Caco-2 (cell line): ENCODE measurements at regions of chr5 and their contacts with region 1.

Region 1: GRCh38 chr5:125700380-125700861 is 722.8 kb upstream of the GRAMD2B start:
- DNase-seq: peak; percentile 44 to 68
- H3K4me3 ChIP-seq: peak overlapping the region; percentile 31
- H3K4me3 Mint-ChIP-seq: peak overlapping the region; percentile 79
- H3K27ac Mint-ChIP-seq: peak overlapping the region; percentile 94
- H3K4me1 ChIP-seq: peaks cover 36% of the 10 kb centered on the region
- H3K4me1 Mint-ChIP-seq: peaks cover 28% of the 10 kb centered on the region
- H3K27me3 ChIP-seq: no peaks in the 10 kb centered on the region
- H3K27me3 Mint-ChIP-seq: no peaks in the 10 kb centered on the region
- CTCF ChIP-seq: no peak

Region 2: DNA sequence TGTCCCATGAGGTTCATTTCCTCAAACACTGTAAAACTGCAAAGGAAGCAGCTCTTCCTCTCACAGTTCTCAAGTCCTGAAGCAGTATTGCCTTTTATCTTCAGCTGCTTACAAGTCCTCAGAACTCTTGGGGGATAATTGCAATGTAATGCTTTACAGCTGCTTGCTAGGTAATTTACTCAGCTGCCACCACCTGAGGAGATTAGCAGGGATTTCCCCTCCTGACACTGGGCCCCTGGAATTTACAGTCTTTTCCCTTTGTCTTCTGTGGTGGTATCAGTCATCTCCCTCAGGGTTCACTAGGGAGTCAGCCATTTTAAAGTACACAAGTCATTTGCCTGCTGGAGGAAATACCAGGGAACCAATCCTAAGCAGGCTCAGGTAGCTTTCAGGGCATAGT is 31.5 kb before region 1 on chr5:
- CTCF ChIA-PET with region 1: no interaction called
- POLR2A ChIA-PET with region 1: no interaction called
- intact Hi-C with region 1: loop called (anchors 1 kb)
- DNase-seq: peak; percentile 84 to 91
- H3K4me3 ChIP-seq: no peak overlapping the region
- H3K4me3 Mint-ChIP-seq: no peak overlapping the region
- H3K27ac Mint-ChIP-seq: peak overlapping the region; percentile 79
- H3K4me1 ChIP-seq: peaks cover 25% of the 10 kb centered on the region
- H3K4me1 Mint-ChIP-seq: peaks cover 16% of the 10 kb centered on the region
- H3K27me3 ChIP-seq: no peaks in the 10 kb centered on the region
- H3K27me3 Mint-ChIP-seq: no peaks in the 10 kb centered on the region
- CTCF ChIP-seq: no peak

Region 3: GRCh38 chr5:125685771-125686170 is 14.7 kb before region 1 on chr5:
- CTCF ChIA-PET with region 1: no interaction called
- POLR2A ChIA-PET with region 1: no interaction called
- intact Hi-C with region 1: no loop called
- DNase-seq: no peak
- H3K4me3 ChIP-seq: no peak overlapping the region
- H3K4me3 Mint-ChIP-seq: no peak overlapping the region
- H3K27ac Mint-ChIP-seq: no peak overlapping the region
- H3K4me1 ChIP-seq: peaks cover 12% of the 10 kb centered on the region
- H3K4me1 Mint-ChIP-seq: peaks cover 25% of the 10 kb centered on the region
- H3K27me3 ChIP-seq: no peaks in the 10 kb centered on the region
- H3K27me3 Mint-ChIP-seq: no peaks in the 10 kb centered on the region
- CTCF ChIP-seq: no peak

Region 4: GRCh38 chr5:125717209-125717608 is 16.8 kb after region 1 on chr5:
- CTCF ChIA-PET with region 1: interaction called, 3 read pairs
- POLR2A ChIA-PET with region 1: interaction called, 7 read pairs
- intact Hi-C with region 1: loop called (anchors 1 kb)
- DNase-seq: peak; percentile 37 to 56
- H3K4me3 ChIP-seq: no peak overlapping the region
- H3K4me3 Mint-ChIP-seq: peak overlapping the region; percentile 56
- H3K27ac Mint-ChIP-seq: peak overlapping the region; percentile 24
- H3K4me1 ChIP-seq: peaks cover 42% of the 10 kb centered on the region
- H3K4me1 Mint-ChIP-seq: peaks cover 23% of the 10 kb centered on the region
- H3K27me3 ChIP-seq: no peaks in the 10 kb centered on the region
- H3K27me3 Mint-ChIP-seq: no peaks in the 10 kb centered on the region
- CTCF ChIP-seq: no peak

Region 5: DNA sequence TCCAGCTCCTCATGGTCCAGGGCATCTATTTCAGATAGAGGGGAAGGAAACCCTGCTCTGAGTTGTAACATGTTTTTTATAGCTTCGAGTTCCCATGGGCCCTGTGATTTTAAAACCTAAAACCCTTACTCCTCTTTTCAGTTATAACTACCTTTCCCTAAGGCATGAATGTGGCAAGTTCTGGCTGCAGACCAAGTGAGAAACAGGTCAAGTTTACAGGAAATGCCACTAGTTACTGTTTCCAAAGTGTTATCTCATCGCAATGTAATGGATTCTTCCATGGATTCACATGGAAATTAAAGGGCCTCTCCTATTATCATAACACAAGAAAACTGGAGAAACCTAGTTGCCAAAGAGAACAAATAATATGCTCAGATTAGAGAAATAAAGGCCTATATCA is 148.3 kb after region 1 on chr5:
- CTCF ChIA-PET with region 1: no interaction called
- POLR2A ChIA-PET with region 1: no interaction called
- intact Hi-C with region 1: no loop called
- DNase-seq: no peak
- H3K4me3 ChIP-seq: no peak overlapping the region
- H3K4me3 Mint-ChIP-seq: no peak overlapping the region
- H3K27ac Mint-ChIP-seq: no peak overlapping the region
- H3K4me1 ChIP-seq: no peaks in the 10 kb centered on the region
- H3K4me1 Mint-ChIP-seq: no peaks in the 10 kb centered on the region
- H3K27me3 ChIP-seq: no peaks in the 10 kb centered on the region
- H3K27me3 Mint-ChIP-seq: no peaks in the 10 kb centered on the region
- CTCF ChIP-seq: no peak